Heart left ventricle (tissue), 16 donors: ENCODE measurements at regions of chr9 and their contacts with region 1.

Region 1: GRCh38 chr9:16154521-16155078 is 601.8 kb downstream of the CCDC171 start:
- DNase-seq: peak in 1 of 5 donors; percentile 51
- ATAC-seq: peak in 3 of 4 donors; percentile 50 to 64 (median 50)
- H3K4me3 ChIP-seq: peak overlapping the region in 5 of 12 donors; percentile 1 to 37 (median 17)
- H3K27ac ChIP-seq: no peak overlapping the region
- H3K4me1 ChIP-seq: peaks cover 0 to 16% (median 0%) of the 10 kb centered on the region in 12 donors
- H3K27me3 ChIP-seq: peaks cover 0 to 10% (median 0%) of the 10 kb centered on the region in 9 donors
- CTCF ChIP-seq: peak in 9 of 12 donors; percentile 13 to 48 (median 36)
- POLR2A ChIP-seq: no peak

Region 2: GRCh38 chr9:16197578-16198370 is 43.2 kb after region 1 on chr9:
- intact Hi-C with region 1: loop called in 1 of 10 experiments (anchors 5 kb)
- DNase-seq: no peak
- ATAC-seq: peak in 3 of 4 donors; percentile 70 to 81 (median 74)
- H3K4me3 ChIP-seq: peak overlapping the region in 1 of 12 donors; percentile 19
- H3K27ac ChIP-seq: peak overlapping the region in 2 of 12 donors; percentile 37 to 48
- H3K4me1 ChIP-seq: peaks cover 0 to 14% (median 0%) of the 10 kb centered on the region in 12 donors
- H3K27me3 ChIP-seq: no peaks in the 10 kb centered on the region
- CTCF ChIP-seq: no peak
- POLR2A ChIP-seq: no peak